BJ (cell line): ENCODE measurements at regions of chr4 and their contacts with region 1.

Region 1: DNA sequence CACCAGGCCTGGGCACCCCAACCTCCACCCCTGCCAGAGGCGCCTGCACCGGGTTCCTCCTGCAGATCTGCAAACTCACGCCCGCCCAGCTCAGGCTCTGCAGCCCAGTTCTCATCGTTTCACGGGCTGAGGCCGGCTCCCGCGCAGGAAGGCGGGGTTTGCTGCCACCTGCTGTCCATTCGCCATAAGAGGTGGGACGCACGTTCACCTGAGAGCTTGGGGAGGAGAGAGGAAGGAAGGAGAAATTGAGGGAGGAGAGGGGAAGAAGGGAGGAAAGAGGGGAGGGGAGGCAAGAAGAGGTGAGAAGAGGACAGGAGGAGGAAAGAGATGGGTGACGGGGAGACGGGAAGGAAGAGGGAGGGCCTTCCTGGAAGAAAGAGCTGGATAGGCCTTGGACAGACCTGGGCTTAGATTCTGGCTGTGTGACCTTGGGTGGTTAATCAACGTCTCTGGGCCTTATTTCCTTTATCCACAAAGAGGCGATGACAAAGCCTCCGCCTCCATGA is 114.5 kb downstream of the ADRA2C start:
- DNase-seq: no peak
- H3K4me3 ChIP-seq: no peak overlapping the region
- H3K27me3 ChIP-seq: peaks cover 21% of the 10 kb centered on the region
- CTCF ChIP-seq: peak; percentile 76

Region 2: GRCh38 chr4:3708103-3708510 is 172.6 kb before region 1 on chr4:
- CTCF ChIA-PET with region 1: no interaction called
- POLR2A ChIA-PET with region 1: no interaction called
- DNase-seq: no peak
- H3K4me3 ChIP-seq: no peak overlapping the region
- H3K27me3 ChIP-seq: peaks cover 7% of the 10 kb centered on the region
- CTCF ChIP-seq: no peak

Region 3: GRCh38 chr4:3827616-3828492 is 52.8 kb before region 1 on chr4:
- CTCF ChIA-PET with region 1: no interaction called
- POLR2A ChIA-PET with region 1: no interaction called
- DNase-seq: no peak
- H3K4me3 ChIP-seq: no peak overlapping the region
- H3K27me3 ChIP-seq: peaks cover 1% of the 10 kb centered on the region; the same call in 1 of the 2 replicates
- CTCF ChIP-seq: no peak

Region 4: DNA sequence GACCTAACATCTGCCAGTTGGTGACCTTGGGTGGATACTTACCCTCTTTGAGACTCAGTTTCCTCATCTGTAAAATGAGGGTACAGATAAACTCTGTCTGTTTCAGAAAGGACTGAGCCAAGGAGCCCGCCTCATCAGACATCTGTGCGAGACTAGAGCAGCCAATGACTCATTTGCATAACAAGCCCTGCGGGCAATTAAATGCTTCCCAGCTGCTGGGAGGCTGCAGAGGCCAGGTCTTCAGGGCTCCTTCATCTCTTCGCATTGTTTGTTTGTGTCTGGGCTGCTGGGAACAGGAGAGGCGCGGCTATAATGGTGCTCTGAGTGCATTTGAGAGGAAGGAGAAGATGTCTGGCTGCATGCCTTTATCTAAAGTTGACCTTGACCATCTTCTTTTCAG is 29.5 kb before region 1 on chr4:
- CTCF ChIA-PET with region 1: no interaction called
- POLR2A ChIA-PET with region 1: no interaction called
- DNase-seq: peak; percentile 13
- H3K4me3 ChIP-seq: no peak overlapping the region
- H3K27me3 ChIP-seq: peaks cover 18% of the 10 kb centered on the region
- CTCF ChIP-seq: no peak

Region 5: GRCh38 chr4:3945511-3946290 is 65.0 kb after region 1 on chr4:
- CTCF ChIA-PET with region 1: interaction called, 19 read pairs
- POLR2A ChIA-PET with region 1: no interaction called
- DNase-seq: no peak
- H3K4me3 ChIP-seq: no peak overlapping the region
- H3K27me3 ChIP-seq: no peaks in the 10 kb centered on the region
- CTCF ChIP-seq: no peak

Region 6: GRCh38 chr4:4182835-4183568 is 302.3 kb after region 1 on chr4:
- CTCF ChIA-PET with region 1: no interaction called
- POLR2A ChIA-PET with region 1: no interaction called
- DNase-seq: no peak
- H3K4me3 ChIP-seq: no peak overlapping the region
- H3K27me3 ChIP-seq: no peaks in the 10 kb centered on the region
- CTCF ChIP-seq: peak; percentile 62